ENCODE measurements at regions of chr3 and their contacts with region 1.

Region 1: GRCh38 chr3:46297658-46298463 is 55.6 kb downstream of the CCR3 start:
- DNase-seq: peak; percentile 29
- ATAC-seq: no peak
- H3K4me3 Mint-ChIP-seq: no peak overlapping the region
- H3K27ac Mint-ChIP-seq: no peak overlapping the region
- H3K4me1 Mint-ChIP-seq: peaks cover 86% of the 10 kb centered on the region
- H3K27me3 Mint-ChIP-seq: peaks cover 22% of the 10 kb centered on the region

Region 2: DNA sequence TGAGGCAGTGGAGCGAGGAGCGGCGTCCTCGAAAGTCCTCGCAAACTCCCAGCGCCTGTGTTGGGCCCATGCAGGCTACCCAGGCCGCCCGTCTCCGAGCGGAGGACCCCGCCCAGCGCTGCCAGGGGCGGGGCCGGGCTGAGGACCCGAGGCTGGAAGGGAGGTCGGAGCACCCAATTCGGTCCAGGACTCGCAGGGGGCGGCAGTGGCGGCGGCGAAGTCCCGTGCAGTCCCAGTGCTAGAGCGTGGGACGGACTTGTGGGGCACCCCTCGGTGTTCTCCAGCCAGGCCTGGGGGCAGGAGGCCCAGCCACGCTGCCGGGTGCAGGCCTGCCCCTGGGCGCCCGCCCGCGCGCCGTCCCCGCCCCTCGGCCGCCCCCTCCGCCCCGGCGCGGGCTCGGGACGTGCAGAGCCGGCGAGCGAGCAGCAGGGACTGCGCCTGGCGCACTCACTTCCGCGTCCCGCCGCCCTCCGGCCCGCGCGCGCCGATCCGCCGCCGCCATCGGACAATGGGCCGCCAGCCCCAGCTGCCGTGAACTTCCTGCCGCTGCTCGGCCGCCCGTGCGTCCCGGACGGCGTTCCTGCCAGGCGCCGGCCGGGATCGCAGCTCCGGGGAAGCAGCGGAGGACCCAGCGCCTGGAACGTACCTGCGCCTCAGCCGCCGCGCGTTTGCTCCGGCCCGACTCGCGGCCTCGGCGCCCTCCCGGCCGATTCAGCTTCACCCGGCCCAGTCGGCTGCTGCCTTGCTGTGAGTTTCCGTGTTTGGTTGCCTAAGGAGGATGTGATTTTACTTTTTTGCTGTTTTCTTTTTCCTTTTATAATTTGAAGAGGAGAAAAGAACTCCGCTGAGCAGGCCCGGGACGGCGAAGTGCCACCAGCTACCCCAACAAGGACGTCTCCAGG is 703.9 kb before region 1 on chr3:
- CTCF ChIA-PET with region 1: no interaction called
- POLR2A ChIA-PET with region 1: no interaction called
- intact Hi-C with region 1: loop called in 1 of 2 experiments (anchors 10 kb)
- DNase-seq: peak; percentile 82
- ATAC-seq: peak; percentile 81
- H3K4me3 Mint-ChIP-seq: peak overlapping the region; percentile 86
- H3K27ac Mint-ChIP-seq: peak overlapping the region; percentile 82
- H3K4me1 Mint-ChIP-seq: peaks cover 46% of the 10 kb centered on the region
- H3K27me3 Mint-ChIP-seq: no peaks in the 10 kb centered on the region

Region 3: GRCh38 chr3:45864760-45865519 is 432.9 kb before region 1 on chr3:
- CTCF ChIA-PET with region 1: no interaction called
- POLR2A ChIA-PET with region 1: no interaction called
- intact Hi-C with region 1: loop called (anchors 2 to 5 kb)
- DNase-seq: peak; percentile 55
- ATAC-seq: peak; percentile 71
- H3K4me3 Mint-ChIP-seq: no peak overlapping the region
- H3K27ac Mint-ChIP-seq: no peak overlapping the region
- H3K4me1 Mint-ChIP-seq: peaks cover 46% of the 10 kb centered on the region
- H3K27me3 Mint-ChIP-seq: peaks cover 52% of the 10 kb centered on the region

Region 4: DNA sequence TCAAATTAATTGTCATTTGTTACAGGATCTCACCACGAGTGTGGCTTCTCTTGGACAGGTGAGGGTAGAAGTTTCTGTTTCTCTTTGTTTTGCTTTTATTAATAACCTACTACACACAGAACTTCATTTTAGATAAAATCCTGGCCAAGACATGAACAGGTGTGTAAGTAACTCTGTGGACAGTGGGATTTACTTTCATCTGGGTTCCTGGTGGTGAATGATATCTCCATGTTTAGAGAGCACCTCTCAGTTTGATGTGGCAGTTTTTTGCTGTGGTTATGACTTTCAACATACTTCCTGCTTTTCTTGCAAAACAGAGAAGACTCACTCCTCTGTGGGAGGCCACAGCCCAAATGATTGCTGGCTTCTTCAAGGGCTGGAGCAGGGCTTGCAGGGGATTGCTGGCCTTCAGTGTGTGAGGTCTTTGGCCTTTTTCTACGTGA is 199.5 kb before region 1 on chr3:
- CTCF ChIA-PET with region 1: interaction called, 3 read pairs
- POLR2A ChIA-PET with region 1: no interaction called
- intact Hi-C with region 1: loop called (anchors 1 to 2 kb)
- DNase-seq: peak; percentile 73
- ATAC-seq: peak; percentile 76
- H3K4me3 Mint-ChIP-seq: no peak overlapping the region
- H3K27ac Mint-ChIP-seq: peak overlapping the region; percentile 62
- H3K4me1 Mint-ChIP-seq: peaks cover 31% of the 10 kb centered on the region
- H3K27me3 Mint-ChIP-seq: peaks cover 51% of the 10 kb centered on the region

Region 5: DNA sequence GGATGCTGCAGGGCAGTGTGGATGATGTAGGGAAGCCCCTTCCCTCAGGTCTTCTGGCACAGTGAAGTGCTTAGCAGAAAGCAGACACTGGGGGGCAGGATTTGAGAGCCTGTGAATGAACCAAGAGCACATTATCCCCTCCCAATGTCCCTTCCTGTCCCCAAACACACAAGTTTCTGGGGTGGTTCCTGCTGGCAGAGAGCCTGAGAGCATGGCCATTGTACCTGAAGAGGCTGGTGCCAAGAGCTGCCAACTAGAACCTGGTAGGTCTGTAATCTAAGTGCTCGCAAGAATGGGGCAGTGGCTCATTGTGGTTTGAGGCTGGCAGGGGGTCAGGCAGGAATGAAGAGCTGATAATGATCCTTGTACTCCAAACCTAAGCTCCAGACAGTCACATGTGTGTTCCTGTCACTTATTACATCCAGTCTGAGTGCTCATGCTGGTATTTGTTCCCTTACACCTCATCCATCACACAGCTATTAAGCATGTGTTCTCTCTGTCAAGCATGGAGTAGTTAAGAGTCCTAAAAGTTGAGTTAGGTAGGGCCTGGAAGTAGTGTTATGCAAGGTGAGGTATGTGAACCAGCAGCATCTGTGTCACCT is 83.0 kb before region 1 on chr3:
- CTCF ChIA-PET with region 1: no interaction called
- POLR2A ChIA-PET with region 1: no interaction called
- intact Hi-C with region 1: no loop called
- DNase-seq: peak; percentile 44
- ATAC-seq: no peak
- H3K4me3 Mint-ChIP-seq: no peak overlapping the region
- H3K27ac Mint-ChIP-seq: no peak overlapping the region
- H3K4me1 Mint-ChIP-seq: no peaks in the 10 kb centered on the region
- H3K27me3 Mint-ChIP-seq: no peaks in the 10 kb centered on the region

Region 6: GRCh38 chr3:46266598-46266997 is 31.3 kb before region 1 on chr3:
- CTCF ChIA-PET with region 1: interaction called, 4 read pairs
- POLR2A ChIA-PET with region 1: no interaction called
- intact Hi-C with region 1: loop called (anchors 1 kb)
- DNase-seq: no peak
- ATAC-seq: no peak
- H3K4me3 Mint-ChIP-seq: no peak overlapping the region
- H3K27ac Mint-ChIP-seq: no peak overlapping the region
- H3K4me1 Mint-ChIP-seq: peaks cover 20% of the 10 kb centered on the region
- H3K27me3 Mint-ChIP-seq: peaks cover 26% of the 10 kb centered on the region

Region 7: DNA sequence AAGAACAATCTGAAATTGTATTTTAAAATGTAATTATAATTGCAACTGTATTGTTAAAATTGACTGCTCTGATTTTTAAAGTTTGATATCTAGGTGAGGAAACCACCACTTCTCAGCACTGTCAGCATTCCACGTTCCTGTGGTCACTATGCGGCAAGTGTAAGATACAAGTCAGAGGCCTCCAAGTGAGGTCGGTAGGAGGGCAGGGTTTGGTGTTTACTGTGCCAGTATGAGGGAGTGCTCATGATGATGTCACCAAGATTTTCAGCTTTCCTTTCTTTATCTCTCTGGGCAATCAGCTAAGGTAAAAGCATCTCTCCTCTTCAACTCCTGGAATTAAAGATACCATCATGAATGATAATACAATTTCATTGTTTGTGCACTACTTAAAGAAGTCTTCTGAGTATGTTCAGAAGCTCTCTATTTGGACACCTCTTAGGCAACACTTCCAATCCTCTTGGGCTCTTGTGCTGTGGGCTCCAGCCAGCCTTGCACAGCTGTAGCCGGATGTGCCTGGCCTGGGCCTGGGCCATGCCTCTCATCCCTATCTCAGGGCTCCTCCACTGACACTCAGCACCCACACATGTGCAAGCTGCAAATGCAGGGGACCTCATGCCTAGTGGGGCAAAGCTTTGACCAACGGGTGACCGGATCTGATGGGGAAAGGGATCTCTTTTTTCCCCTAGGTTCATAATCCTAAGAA is 12.7 kb before region 1 on chr3:
- CTCF ChIA-PET with region 1: interaction called, 21 read pairs
- POLR2A ChIA-PET with region 1: interaction called, 5 read pairs
- intact Hi-C with region 1: loop called (anchors 1 kb)
- DNase-seq: peak; percentile 60
- ATAC-seq: peak; percentile 62
- H3K4me3 Mint-ChIP-seq: no peak overlapping the region
- H3K27ac Mint-ChIP-seq: no peak overlapping the region
- H3K4me1 Mint-ChIP-seq: peaks cover 64% of the 10 kb centered on the region
- H3K27me3 Mint-ChIP-seq: peaks cover 18% of the 10 kb centered on the region

Region 8: DNA sequence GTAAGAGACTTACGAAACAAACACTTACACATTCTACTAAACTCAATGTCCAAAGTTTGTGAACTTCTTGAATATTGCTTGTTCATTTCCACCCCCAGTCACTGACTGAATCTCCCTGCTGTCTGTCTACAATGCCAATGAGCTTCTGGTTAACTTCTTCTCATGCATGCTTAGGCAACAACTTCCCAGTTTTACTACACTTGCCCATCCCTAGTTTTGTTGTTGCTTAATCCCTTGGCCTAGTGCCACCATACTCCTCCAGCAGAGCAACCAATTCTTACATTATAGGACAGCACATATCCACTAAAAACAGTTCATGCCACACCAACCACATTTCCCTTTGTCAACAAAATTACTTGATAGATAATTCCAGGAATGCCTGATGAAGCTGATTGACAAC is 15.1 kb after region 1 on chr3:
- CTCF ChIA-PET with region 1: no interaction called
- POLR2A ChIA-PET with region 1: no interaction called
- intact Hi-C with region 1: no loop called
- DNase-seq: no peak
- ATAC-seq: no peak
- H3K4me3 Mint-ChIP-seq: no peak overlapping the region
- H3K27ac Mint-ChIP-seq: no peak overlapping the region
- H3K4me1 Mint-ChIP-seq: no peaks in the 10 kb centered on the region
- H3K27me3 Mint-ChIP-seq: peaks cover 33% of the 10 kb centered on the region

Region 9: GRCh38 chr3:46359733-46360493 is 62.1 kb after region 1 on chr3:
- CTCF ChIA-PET with region 1: interaction called, 4 read pairs
- POLR2A ChIA-PET with region 1: no interaction called
- intact Hi-C with region 1: loop called in 1 of 2 experiments (anchors 1 kb)
- DNase-seq: peak; percentile 57
- ATAC-seq: peak; percentile 95
- H3K4me3 Mint-ChIP-seq: no peak overlapping the region
- H3K27ac Mint-ChIP-seq: no peak overlapping the region
- H3K4me1 Mint-ChIP-seq: peaks cover 27% of the 10 kb centered on the region
- H3K27me3 Mint-ChIP-seq: peaks cover 42% of the 10 kb centered on the region

Region 10: GRCh38 chr3:46423588-46423987 is 125.7 kb after region 1 on chr3:
- CTCF ChIA-PET with region 1: no interaction called
- POLR2A ChIA-PET with region 1: no interaction called
- intact Hi-C with region 1: no loop called
- DNase-seq: no peak
- ATAC-seq: no peak
- H3K4me3 Mint-ChIP-seq: no peak overlapping the region
- H3K27ac Mint-ChIP-seq: no peak overlapping the region
- H3K4me1 Mint-ChIP-seq: peaks cover 4% of the 10 kb centered on the region
- H3K27me3 Mint-ChIP-seq: no peaks in the 10 kb centered on the region